ENCODE measurements at regions of chr9 and their contacts with region 1.

Region 1: GRCh38 chr9:137406876-137407589 is 15.9 kb downstream of the EXD3 start:
- DNase-seq: peak; percentile 71 to 79
- ATAC-seq: peak; percentile 82 to 88 (median 87)
- H3K4me3 ChIP-seq: peak overlapping the region in 9 of 10 donors; percentile 25 to 57 (median 51)
- H3K27ac ChIP-seq: peak overlapping the region in 9 of 10 donors; percentile 42 to 85 (median 79)
- H3K4me1 ChIP-seq: peaks cover 17 to 49% (median 34%) of the 10 kb centered on the region in 9 donors
- H3K27me3 ChIP-seq: peaks cover 0 to 22% (median 0%) of the 10 kb centered on the region in 7 donors
- CTCF ChIP-seq: peak; percentile 75 to 96 (median 88)

Region 2: GRCh38 chr9:137302176-137302994 is 104.6 kb before region 1 on chr9 and contains the start of gene NRARP:
- intact Hi-C with region 1: loop called in 3 of 10 experiments (anchors 5 kb)
- DNase-seq: peak; percentile 92
- ATAC-seq: peak; percentile 39 to 75 (median 62)
- H3K4me3 ChIP-seq: peak within 1 kb of the TSS; percentile 53 to 87 (median 68)
- H3K27ac ChIP-seq: peak within 1 kb of the TSS; percentile 70 to 96 (median 91)
- H3K4me1 ChIP-seq: peaks cover 15 to 85% (median 74%) of the 10 kb centered on the region in 9 donors
- H3K27me3 ChIP-seq: peaks cover 0 to 92% (median 7%) of the 10 kb centered on the region in 7 donors
- CTCF ChIP-seq: peak; percentile 40 to 70 (median 60)
- total RNA-seq, gene NRARP: 2.6 to 20.8 (median 11.7) TPM

Region 3: DNA sequence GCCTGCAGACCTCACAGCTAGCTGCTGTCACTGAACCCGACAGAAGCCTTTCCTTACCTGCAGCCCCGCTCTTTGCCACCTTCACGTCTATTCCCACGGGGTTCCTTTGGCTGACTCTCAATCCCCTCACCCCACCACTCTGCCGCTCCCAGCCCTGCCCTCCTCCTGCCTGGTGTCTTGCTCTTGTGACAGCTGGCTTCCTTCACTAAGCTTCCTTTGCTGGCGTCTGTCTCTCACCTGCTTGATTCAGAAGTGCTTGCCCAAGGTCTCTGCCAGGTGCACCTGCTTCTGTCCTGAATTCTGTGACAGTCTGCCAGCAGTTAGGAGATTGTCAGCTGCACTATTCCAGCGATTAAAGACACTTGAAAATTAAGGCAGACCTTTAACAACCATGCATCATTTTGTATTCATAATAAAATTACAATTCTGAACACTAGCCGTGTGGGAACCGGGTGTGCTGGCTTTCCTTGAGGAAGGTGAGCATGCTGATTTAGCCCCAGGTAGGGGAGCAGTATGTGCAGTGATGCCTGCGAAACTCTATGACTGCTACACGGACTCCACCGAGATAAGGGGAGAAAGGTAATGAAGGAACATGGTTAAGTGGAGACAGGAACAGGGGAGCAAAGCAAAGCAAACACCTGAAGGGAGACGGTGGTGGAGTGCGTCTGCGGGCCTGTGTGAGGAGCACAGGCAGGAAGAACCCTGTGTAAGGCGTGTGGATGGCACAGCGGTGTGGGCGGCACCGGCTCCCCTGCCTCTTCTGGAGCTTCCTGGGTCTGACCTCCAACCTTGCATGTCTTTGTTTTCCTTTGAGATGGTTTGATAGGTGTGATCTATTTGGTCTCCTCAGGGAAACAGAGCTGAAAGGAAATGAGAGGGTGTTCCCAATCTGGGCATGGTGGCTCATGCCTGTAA is 390.4 kb after region 1 on chr9:
- intact Hi-C with region 1: no loop called
- DNase-seq: no peak
- ATAC-seq: no peak
- H3K4me3 ChIP-seq: no peak overlapping the region
- H3K27ac ChIP-seq: no peak overlapping the region
- H3K4me1 ChIP-seq: no peaks in the 10 kb centered on the region
- H3K27me3 ChIP-seq: no peaks in the 10 kb centered on the region
- CTCF ChIP-seq: no peak

Measured in heart right ventricle (tissue), 16 donors.